Activated T-helper 2 cell treated with anti-CD3 and anti-CD28 coated beads, Interferon-gamma antibody, Interleukin-2, Interleukin-4, amounts not matched to agents 10 μg/mL and 5 μg/mL and 100 μg/mL, durations not matched to agents 14 hours and 24 hours and 36 hours (primary cell): ENCODE measurements at regions of chr12 and their contacts with region 1.

Region 1: DNA sequence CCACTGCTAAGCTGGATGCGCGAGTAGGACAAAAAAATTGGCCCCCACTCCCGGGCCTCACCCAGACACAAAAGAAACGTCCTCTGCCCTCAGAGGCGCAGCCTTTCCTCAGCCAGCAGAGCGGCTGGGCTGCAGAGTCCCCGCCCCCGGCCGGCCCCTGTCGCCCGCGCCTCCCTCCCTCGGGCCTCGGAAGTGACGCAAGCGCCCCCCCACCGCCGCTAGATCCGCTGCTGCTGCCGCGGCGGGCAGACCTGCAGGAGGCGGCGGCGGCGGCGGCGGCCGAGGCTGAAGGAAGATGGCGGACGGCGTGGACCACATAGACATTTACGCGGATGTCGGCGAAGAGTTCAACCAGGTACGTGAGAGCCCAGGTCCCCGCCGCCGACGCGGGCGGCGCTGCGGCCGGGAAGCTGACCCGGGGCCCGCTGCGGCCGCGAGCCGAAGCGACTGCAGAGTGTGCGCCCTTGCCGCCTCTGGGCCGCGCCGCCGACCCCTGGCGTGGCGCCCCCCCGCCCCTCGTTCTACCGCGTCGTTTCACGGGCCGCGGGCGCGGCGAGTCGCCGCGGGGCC is at the start of gene CPSF6:
- DNase-seq: peak; percentile 93
- H3K4me3 Mint-ChIP-seq: peak within 1 kb of the TSS; percentile 96
- H3K27ac Mint-ChIP-seq: peak within 1 kb of the TSS; percentile 96
- H3K4me1 Mint-ChIP-seq: peaks cover 36% of the 10 kb centered on the region
- H3K27me3 Mint-ChIP-seq: no peaks in the 10 kb centered on the region
- total RNA-seq, gene CPSF6: 107 and 119 TPM in 2 replicates

Region 2: DNA sequence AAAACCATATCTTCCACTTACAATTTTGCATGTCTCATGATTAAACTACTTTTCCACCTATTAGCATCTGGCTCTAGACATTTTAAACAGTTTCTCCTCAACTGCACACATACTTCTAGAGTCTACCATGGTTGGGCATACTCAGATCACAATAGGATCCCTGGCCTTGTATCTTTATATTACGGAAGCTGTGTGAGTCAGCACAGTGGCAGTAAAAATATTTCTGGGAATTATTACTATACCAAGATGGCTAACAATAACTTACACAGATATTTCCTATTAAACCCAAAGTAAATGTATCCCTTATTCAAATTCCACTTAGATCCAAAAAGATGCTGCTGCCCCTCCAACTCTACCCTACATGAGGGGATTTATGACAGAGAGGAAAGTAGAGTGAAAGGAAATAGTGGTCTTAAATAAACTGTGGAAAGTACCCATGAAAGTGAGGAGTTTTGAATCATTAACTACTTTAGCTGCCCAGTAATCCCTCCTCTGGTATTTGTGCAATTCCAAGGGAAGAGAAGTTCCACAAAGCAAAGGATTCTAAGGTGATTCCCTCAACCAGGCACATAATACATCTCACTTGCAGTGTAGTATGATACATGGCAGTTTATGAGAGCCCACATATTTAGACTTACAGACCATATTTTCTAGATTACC is 14.1 kb before region 1 on chr12:
- intact Hi-C with region 1: no loop called
- DNase-seq: no peak
- H3K4me3 Mint-ChIP-seq: no peak overlapping the region
- H3K27ac Mint-ChIP-seq: no peak overlapping the region
- H3K4me1 Mint-ChIP-seq: peaks cover 4% of the 10 kb centered on the region
- H3K27me3 Mint-ChIP-seq: peaks cover 15% of the 10 kb centered on the region

Region 3: GRCh38 chr12:69254046-69254445 is 14.6 kb after region 1 on chr12:
- intact Hi-C with region 1: loop called (anchors 1 kb)
- DNase-seq: no peak
- H3K4me3 Mint-ChIP-seq: no peak overlapping the region
- H3K27ac Mint-ChIP-seq: peak overlapping the region; percentile 54
- H3K4me1 Mint-ChIP-seq: peaks cover 36% of the 10 kb centered on the region
- H3K27me3 Mint-ChIP-seq: no peaks in the 10 kb centered on the region

Region 4: DNA sequence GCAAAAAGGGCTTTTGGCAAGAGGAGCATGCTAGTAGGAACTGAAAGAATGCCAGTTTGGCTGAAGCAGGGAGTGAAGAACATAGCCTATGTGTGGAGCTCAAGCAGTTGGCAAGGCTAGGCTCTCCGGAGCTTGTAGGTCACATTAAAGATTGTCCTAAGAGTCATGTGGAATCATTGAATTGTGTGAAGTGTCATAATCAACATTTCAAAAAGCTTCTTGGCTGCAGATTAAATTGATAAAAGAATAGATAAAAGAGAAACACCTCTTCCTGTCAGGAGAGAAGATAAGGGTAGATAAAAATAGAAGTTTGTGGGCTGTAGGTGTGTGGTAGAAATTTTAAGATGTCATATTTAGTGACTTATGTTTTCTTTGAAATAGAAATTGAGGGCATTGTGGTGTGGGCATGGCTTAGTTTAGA is 36.0 kb after region 1 on chr12:
- intact Hi-C with region 1: loop called (anchors 2 kb)
- DNase-seq: no peak
- H3K4me3 Mint-ChIP-seq: no peak overlapping the region
- H3K27ac Mint-ChIP-seq: peak overlapping the region; percentile 26
- H3K4me1 Mint-ChIP-seq: peaks cover 31% of the 10 kb centered on the region
- H3K27me3 Mint-ChIP-seq: no peaks in the 10 kb centered on the region

Region 5: GRCh38 chr12:69585189-69586062 is 346.0 kb after region 1 on chr12 and contains the start of gene CCT2:
- intact Hi-C with region 1: loop called (anchors 1 kb)
- DNase-seq: peak; percentile 95
- H3K4me3 Mint-ChIP-seq: peak within 1 kb of the TSS; percentile 97
- H3K27ac Mint-ChIP-seq: peak within 1 kb of the TSS; percentile 97
- H3K4me1 Mint-ChIP-seq: peaks cover 15% of the 10 kb centered on the region
- H3K27me3 Mint-ChIP-seq: no peaks in the 10 kb centered on the region
- total RNA-seq, gene CCT2: 409 and 416 TPM in 2 replicates